Activated B cell treated with CpG ODN at 0.5 μM for 24 hours (primary cell): ENCODE measurements at regions of chr3 and their contacts with region 1.

Region 1: DNA sequence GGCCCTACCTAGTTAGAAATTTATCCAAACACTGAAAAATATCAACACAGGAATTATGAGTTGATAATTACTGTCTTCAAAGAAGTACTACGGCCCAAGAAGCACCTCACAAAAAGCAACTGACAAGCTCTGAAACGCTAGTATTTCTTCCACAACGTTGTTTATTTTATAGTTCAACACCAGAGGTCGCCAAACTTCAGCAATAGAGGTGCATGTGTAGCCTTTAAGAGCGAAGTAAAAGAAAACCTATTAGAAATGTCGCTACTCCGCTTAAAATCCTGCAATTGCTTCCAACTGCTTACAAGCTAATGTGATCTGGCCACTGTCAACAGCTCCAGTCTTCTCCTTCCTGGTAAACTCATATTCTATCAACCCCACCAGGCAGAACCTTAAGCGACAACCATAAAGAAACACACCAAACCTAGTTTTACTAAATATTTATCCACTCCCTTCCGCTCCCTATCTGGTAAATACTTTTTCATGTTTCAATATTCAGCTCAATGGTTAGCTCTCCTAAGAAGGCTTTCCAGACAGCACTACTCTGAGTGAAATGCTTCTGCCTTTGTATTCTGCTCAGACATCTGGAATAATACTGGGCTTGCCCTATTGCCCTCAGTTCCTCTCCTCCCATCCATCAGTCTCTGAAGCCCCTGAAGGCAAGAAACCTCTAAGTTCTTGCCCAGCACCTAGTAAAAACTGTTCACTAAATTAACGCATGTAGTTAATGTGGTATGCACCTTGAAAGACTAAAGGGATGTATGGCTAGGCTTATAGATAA is 110.2 kb downstream of the NR1I2 start:
- DNase-seq: no peak
- ATAC-seq: no peak
- H3K4me3 Mint-ChIP-seq: no peak overlapping the region
- H3K27ac Mint-ChIP-seq: no peak overlapping the region
- H3K4me1 Mint-ChIP-seq: peaks cover 6% of the 10 kb centered on the region
- H3K27me3 Mint-ChIP-seq: no peaks in the 10 kb centered on the region
- CTCF ChIP-seq: peak; percentile 22

Region 2: DNA sequence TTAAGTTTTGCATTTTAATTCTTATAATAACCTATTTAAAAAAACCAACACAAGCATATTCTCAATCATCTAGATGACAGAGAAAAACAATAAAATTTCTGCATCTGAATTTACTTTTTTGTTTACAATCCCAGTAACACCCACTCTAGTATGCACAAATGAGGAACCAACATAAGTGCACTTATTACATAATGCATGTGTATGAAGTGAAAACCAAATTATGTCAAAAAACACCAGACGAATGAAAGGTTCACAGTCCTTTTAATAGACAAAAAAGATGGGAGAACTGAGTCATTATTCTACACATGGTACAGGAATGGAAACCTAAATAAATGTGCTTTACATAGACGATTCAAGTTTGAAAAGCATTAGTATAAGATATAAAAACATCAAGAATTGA is 18.5 kb before region 1 on chr3:
- CTCF ChIA-PET with region 1: no interaction called
- POLR2A ChIA-PET with region 1: no interaction called
- intact Hi-C with region 1: no loop called
- DNase-seq: no peak
- ATAC-seq: no peak
- H3K4me3 Mint-ChIP-seq: no peak overlapping the region
- H3K27ac Mint-ChIP-seq: no peak overlapping the region
- H3K4me1 Mint-ChIP-seq: peaks cover under 1% of the 10 kb centered on the region
- H3K27me3 Mint-ChIP-seq: no peaks in the 10 kb centered on the region
- CTCF ChIP-seq: no peak

Region 3: GRCh38 chr3:120081719-120082118 is 189.6 kb after region 1 on chr3:
- CTCF ChIA-PET with region 1: no interaction called
- POLR2A ChIA-PET with region 1: interaction called, 4 read pairs
- intact Hi-C with region 1: loop called (anchors 10 kb)
- DNase-seq: no peak
- ATAC-seq: no peak
- H3K4me3 Mint-ChIP-seq: no peak overlapping the region
- H3K27ac Mint-ChIP-seq: no peak overlapping the region
- H3K4me1 Mint-ChIP-seq: peaks cover 40% of the 10 kb centered on the region
- H3K27me3 Mint-ChIP-seq: no peaks in the 10 kb centered on the region
- CTCF ChIP-seq: no peak

Region 4: GRCh38 chr3:120182724-120183524 is 290.8 kb after region 1 on chr3:
- CTCF ChIA-PET with region 1: interaction called, 9 read pairs
- POLR2A ChIA-PET with region 1: no interaction called
- intact Hi-C with region 1: loop called (anchors 1 kb)
- DNase-seq: no peak
- ATAC-seq: no peak
- H3K4me3 Mint-ChIP-seq: no peak overlapping the region
- H3K27ac Mint-ChIP-seq: no peak overlapping the region
- H3K4me1 Mint-ChIP-seq: no peaks in the 10 kb centered on the region
- H3K27me3 Mint-ChIP-seq: no peaks in the 10 kb centered on the region
- CTCF ChIP-seq: no peak

Region 5: DNA sequence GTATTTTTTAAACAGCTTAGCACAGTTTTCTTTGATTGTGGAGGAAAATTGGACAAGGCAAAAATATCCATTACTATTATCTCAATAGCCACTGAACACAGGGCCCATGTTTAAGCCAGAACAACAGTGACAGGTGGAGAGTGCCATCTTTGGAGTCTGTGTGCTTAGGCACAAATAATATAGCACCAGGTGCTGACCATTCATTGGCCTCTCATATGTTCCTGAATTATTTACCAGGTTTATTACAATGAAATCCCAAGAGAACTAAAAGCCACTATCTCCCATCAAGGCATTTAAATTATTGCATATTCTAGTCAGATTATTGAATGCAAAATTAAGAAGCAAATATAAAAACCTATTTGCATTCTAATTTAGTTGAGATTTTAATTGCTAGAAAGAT is 353.3 kb after region 1 on chr3:
- CTCF ChIA-PET with region 1: interaction called, 5 read pairs
- POLR2A ChIA-PET with region 1: no interaction called
- intact Hi-C with region 1: loop called (anchors 2 kb)
- DNase-seq: no peak
- ATAC-seq: no peak
- H3K4me3 Mint-ChIP-seq: no peak overlapping the region
- H3K27ac Mint-ChIP-seq: no peak overlapping the region
- H3K4me1 Mint-ChIP-seq: no peaks in the 10 kb centered on the region
- H3K27me3 Mint-ChIP-seq: peaks cover 22% of the 10 kb centered on the region
- CTCF ChIP-seq: no peak

Region 6: DNA sequence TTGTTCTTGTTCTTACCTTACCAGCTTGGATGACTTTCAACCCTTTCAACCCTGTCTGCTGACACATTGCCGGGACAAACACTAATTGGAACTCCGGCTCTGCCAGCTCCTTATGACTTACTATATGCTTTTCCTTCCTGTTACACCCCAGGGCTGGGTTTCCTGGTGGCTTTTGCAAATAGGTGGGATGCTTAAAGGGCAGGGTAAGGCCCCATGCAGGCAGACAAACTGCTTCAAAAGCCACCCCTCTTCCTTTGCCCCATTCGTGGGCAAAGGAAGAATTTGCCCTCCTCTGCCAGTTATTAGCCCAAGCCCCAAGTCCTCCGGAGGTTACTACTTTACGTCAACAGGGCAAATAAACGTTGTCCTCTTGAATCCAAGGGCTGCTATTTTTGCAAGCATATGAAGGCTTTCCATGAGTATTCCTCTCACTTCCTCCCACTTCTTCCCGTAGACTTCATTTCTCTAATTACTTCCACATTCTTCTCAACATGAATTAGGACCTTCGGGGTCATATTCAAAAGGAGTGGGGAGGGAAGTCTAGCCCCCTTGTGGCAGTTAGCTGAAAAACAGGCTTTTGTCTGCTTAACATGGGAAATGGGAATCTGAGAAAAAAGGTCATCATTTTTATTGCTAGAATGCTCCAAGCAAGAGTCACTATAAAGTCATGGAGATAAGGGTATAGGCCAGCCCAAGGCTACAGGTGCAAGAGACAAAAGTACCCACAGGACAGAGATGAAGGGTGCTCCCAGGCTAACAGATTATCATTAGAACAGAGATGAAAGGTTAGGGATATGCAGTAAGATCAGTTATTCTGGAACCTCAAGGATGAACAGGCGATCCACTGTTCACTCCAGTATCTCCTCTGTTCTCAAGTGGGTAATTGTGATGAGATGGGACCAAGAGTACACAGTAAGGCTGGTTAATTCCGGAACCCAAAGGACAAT is 615.0 kb after region 1 on chr3:
- CTCF ChIA-PET with region 1: interaction called, 4 read pairs
- POLR2A ChIA-PET with region 1: no interaction called
- intact Hi-C with region 1: loop called (anchors 1 kb)
- DNase-seq: no peak
- ATAC-seq: no peak
- H3K4me3 Mint-ChIP-seq: no peak overlapping the region
- H3K27ac Mint-ChIP-seq: no peak overlapping the region
- H3K4me1 Mint-ChIP-seq: no peaks in the 10 kb centered on the region
- H3K27me3 Mint-ChIP-seq: peaks cover 10% of the 10 kb centered on the region
- CTCF ChIP-seq: no peak